Activated naive CD4-positive, alpha-beta T cell treated with anti-CD3 and anti-CD28 coated beads for 36 hours (primary cell): ENCODE measurements at regions of chr16 and their contacts with region 1.

Region 1: GRCh38 chr16:14285513-14286385 is 214.6 kb downstream of the MRTFB start:
- DNase-seq: peak; percentile 94
- H3K4me3 Mint-ChIP-seq: peak overlapping the region; percentile 83
- H3K27ac Mint-ChIP-seq: peak overlapping the region; percentile 76
- H3K4me1 Mint-ChIP-seq: peaks cover 8% of the 10 kb centered on the region
- H3K27me3 Mint-ChIP-seq: no peaks in the 10 kb centered on the region

Region 2: GRCh38 chr16:13935408-13935807 is 350.3 kb before region 1 on chr16:
- CTCF ChIA-PET with region 1: interaction called, 4 read pairs
- intact Hi-C with region 1: loop called (anchors 5 kb)
- DNase-seq: peak; percentile 38
- H3K4me3 Mint-ChIP-seq: no peak overlapping the region
- H3K27ac Mint-ChIP-seq: no peak overlapping the region
- H3K4me1 Mint-ChIP-seq: peaks cover 15% of the 10 kb centered on the region
- H3K27me3 Mint-ChIP-seq: no peaks in the 10 kb centered on the region

Region 3: DNA sequence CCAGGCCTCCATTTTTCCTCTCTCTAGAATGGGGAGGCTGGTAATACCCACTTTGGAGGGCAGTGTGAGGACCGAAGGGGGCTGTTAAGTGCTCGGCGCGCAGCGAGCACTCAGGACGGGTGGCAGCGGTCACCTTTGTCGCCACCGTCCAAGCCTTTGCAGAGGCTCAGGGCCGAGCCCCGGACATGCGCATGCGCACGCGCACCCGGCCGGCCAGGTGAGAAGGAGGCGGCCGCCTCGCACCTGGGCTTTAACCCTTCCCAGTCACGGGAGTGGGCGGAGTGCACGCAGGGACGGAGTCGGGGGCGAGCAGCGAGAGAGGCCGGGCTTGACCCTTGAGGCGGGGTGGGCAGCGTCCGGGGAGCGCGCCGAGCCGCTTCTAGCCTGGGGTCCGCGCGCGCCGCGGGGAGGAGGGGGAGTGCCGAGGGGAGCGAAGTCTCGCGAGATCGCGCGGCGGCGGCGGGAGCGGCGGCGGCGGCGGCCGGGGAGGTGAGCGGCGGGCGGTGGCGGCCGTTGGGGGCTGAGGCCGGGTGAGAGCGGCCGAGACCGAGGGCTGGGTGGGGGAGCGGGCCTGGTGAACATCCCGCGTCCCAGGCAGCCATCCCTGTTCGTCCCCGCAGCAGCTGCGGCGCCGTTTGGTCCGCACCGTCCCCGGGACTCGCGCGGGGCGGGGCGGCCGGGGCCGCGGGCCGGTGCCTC is 214.7 kb before region 1 on chr16 and contains the start of gene MRTFB:
- CTCF ChIA-PET with region 1: no interaction called
- intact Hi-C with region 1: loop called (anchors 5 kb)
- DNase-seq: peak; percentile 76
- H3K4me3 Mint-ChIP-seq: peak within 1 kb of the TSS; percentile 86
- H3K27ac Mint-ChIP-seq: peak within 1 kb of the TSS; percentile 59
- H3K4me1 Mint-ChIP-seq: peaks cover 11% of the 10 kb centered on the region
- H3K27me3 Mint-ChIP-seq: no peaks in the 10 kb centered on the region
- total RNA-seq, gene MRTFB: 8.2 to 8.4 TPM

Region 4: DNA sequence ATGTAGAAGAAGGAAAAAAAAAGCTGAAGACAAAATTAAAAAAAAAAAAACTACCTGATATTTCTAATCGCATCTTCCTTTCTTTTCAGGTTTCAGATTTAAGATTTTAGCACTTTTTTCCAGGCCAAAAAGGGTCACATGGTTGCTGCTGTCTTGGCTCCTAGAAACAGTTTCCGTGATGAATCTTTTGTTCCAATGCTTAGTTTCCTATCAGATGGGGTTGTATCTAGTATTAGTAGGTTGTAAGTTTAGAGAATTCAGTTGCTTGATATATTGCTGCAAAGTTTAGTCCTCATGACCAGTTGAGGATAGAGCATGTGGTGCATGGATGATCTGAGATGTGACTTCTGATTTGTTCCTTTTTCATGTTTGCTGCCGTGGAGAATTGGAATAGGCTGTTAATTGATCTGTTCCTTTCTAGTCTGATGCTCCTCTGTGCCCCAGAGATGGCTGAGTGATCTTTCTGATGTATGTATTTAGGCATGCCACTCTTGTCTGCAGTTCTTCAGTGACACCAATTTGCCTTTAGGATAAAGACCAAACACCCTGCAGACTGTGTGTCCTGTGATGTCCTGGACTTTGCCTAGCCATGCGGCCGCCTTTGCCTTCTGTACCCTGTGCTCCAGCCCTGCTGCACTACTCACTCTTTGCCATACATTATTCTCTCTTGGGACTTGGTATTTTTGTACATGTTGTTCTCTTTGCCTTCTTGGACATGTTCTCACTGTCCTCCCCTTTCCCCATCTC is 120.7 kb before region 1 on chr16:
- CTCF ChIA-PET with region 1: no interaction called
- intact Hi-C with region 1: no loop called
- DNase-seq: no peak
- H3K4me3 Mint-ChIP-seq: no peak overlapping the region
- H3K27ac Mint-ChIP-seq: no peak overlapping the region
- H3K4me1 Mint-ChIP-seq: peaks cover 20% of the 10 kb centered on the region
- H3K27me3 Mint-ChIP-seq: no peaks in the 10 kb centered on the region

Region 5: DNA sequence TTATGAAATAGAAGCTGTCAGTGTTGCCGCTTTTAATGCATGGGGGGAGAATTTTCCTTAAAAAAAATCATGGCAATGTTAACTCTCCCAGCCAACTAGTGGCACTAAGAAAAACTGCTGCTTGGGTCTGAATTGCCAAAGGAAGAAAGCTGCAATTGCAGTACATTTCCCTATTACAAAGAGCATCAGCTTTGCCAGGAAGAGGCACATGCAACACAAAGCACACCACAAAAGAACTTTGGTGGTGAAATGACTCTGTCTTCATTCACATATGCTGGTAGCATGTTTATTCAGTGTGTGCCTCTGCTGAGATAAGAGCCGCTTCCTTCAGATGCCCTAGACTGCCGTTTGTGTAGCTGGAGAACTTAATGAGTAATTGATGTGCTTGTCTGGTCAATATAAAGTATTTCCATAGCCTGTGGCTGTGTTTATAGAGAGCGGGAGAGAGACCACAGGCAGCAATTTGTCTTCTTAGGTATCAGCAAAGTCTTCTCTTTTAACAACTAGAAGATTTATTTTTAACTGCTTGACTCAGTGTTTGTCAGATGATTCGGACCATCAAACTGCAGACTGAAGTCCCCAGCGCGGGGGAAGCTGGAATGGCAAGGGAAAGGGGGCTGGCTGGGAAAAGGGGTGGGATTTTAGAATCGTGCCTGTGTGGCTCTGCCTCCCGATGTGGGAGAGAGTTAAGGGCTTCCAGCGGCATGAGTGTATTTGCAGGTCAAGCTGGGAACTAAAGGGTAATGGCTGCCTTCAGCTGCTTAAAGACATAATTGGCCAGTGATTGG is 99.5 kb before region 1 on chr16:
- CTCF ChIA-PET with region 1: interaction called, 4 read pairs
- intact Hi-C with region 1: loop called (anchors 5 kb)
- DNase-seq: peak; percentile 51
- H3K4me3 Mint-ChIP-seq: peak overlapping the region; percentile 26
- H3K27ac Mint-ChIP-seq: peak overlapping the region; percentile 48
- H3K4me1 Mint-ChIP-seq: peaks cover 30% of the 10 kb centered on the region
- H3K27me3 Mint-ChIP-seq: no peaks in the 10 kb centered on the region

Region 6: DNA sequence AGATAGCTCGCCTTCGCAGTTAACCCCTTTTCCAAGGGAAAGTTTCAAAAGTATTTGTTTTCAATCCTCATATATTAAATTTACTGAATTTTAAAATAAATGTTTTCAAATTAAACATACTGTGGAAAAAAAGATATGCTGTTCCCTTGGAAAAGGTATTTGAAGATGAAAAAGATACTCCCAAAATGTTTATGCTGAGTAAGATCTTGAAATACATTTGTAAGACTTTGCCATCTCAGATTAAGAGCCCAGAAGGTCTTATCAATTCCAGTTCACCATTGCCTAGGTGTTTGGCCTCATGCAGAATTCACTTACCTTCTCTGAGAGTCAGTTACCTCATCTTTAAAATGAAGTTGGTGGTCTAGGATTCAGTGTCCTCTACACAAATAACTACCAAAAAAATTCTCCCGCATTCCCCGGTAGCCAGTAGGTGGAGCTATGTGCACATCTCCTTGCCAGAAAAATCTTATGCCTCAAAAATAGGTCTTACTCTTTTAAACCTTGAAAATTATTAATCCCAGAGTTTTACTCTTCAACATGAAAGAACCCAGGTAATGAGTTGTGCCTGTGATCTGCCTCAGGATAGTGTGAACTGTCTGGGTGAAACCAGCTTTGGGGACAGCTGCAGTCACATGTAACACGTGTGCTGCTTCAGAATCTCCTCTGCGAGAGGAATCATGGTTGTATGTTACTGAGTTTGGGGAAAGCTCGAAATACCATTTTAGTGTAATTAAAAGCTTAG is 36.3 kb before region 1 on chr16:
- CTCF ChIA-PET with region 1: interaction called, 4 read pairs
- intact Hi-C with region 1: loop called (anchors 1 kb)
- DNase-seq: peak; percentile 74
- H3K4me3 Mint-ChIP-seq: no peak overlapping the region
- H3K27ac Mint-ChIP-seq: no peak overlapping the region
- H3K4me1 Mint-ChIP-seq: peaks cover 3% of the 10 kb centered on the region
- H3K27me3 Mint-ChIP-seq: no peaks in the 10 kb centered on the region

Region 7: DNA sequence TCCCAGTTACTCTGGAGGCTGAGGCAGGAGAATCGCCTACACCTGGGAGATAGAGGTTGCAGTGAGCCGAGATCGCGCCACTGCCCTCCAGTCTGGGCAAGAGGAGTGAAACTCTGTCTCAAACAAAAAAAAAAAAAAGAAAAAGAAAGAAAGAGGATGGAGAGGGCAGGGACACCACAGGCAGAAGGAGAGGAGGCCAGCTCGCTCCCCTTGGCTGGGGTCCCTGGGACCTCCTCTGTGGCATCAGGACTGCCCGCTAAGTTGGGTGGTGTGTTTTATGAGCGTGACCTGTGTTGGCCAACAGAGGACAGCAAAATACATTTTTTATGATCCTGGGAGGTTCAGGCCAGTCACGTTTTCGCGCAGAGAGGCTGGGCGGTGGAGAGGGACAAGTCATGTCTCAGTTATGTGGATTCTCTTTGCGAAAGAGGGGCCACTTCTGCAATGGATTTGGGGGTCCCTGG is 15.0 kb after region 1 on chr16:
- CTCF ChIA-PET with region 1: interaction called, 7 read pairs
- intact Hi-C with region 1: loop called (anchors 1 kb)
- DNase-seq: peak; percentile 73
- H3K4me3 Mint-ChIP-seq: peak overlapping the region; percentile 66
- H3K27ac Mint-ChIP-seq: no peak overlapping the region
- H3K4me1 Mint-ChIP-seq: peaks cover 12% of the 10 kb centered on the region
- H3K27me3 Mint-ChIP-seq: no peaks in the 10 kb centered on the region

Region 8: DNA sequence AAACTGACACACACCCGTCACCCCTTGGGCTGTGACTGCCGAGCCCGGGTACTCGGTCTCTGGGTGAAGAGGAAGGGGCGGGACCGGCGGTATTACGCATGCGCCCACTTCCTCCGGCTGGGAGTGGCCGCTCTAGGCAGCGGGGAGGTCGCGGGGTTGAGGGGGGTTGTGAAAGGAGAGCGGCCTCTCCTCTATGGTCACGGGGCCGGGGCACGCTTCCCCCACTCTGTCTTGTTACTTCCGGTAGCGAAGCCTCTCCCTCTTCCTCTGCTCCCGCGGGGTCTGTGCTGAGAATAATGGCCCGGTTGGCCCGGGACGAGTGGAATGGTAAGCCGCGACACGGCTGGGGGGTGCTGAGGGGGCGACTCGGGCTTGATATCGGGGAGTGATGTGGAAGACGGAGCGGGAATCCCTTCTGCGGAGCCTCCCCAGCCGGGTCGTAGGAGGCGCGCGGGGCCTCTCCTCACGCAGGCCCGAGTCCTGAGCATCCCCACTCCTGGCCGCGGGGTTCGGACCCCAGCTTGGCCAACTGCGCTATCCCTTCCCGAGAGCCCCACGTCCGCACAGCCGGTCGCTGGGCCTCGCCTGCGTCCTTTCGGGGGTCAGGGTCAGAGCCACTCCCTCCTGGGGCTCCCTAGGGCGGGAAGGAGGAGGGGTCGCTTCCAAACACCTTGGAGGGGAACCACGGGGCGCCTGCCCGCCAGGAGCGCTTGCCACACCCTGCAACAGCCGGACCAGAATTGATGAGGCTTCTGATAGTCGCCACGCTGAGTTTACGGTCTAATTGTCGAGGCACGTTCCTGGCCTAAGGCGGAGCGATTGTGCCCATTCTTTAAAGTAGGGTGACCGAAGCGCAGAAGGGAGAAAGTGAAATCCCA is 347.2 kb after region 1 on chr16 and contains the start of gene BFAR:
- CTCF ChIA-PET with region 1: no interaction called
- intact Hi-C with region 1: loop called (anchors 5 kb)
- DNase-seq: peak; percentile 98
- H3K4me3 Mint-ChIP-seq: peak within 1 kb of the TSS; percentile 100
- H3K27ac Mint-ChIP-seq: peak within 1 kb of the TSS; percentile 96
- H3K4me1 Mint-ChIP-seq: peaks cover 57% of the 10 kb centered on the region
- H3K27me3 Mint-ChIP-seq: no peaks in the 10 kb centered on the region
- total RNA-seq, gene BFAR: 41.9 to 44.6 TPM